Activated T-helper 1 cell treated with anti-CD3 and anti-CD28 coated beads, Interleukin-12 subunit alpha, Interleukin-12 subunit beta, Interleukin-2, Interleukin-4 antibody, amounts not matched to agents 30 ng/mL and 10 ng/mL and 1 ng/mL, durations not matched to agents 14 hours and 24 hours and 36 hours (primary cell): ENCODE measurements at regions of chr2 and their contacts with region 1.

Region 1: DNA sequence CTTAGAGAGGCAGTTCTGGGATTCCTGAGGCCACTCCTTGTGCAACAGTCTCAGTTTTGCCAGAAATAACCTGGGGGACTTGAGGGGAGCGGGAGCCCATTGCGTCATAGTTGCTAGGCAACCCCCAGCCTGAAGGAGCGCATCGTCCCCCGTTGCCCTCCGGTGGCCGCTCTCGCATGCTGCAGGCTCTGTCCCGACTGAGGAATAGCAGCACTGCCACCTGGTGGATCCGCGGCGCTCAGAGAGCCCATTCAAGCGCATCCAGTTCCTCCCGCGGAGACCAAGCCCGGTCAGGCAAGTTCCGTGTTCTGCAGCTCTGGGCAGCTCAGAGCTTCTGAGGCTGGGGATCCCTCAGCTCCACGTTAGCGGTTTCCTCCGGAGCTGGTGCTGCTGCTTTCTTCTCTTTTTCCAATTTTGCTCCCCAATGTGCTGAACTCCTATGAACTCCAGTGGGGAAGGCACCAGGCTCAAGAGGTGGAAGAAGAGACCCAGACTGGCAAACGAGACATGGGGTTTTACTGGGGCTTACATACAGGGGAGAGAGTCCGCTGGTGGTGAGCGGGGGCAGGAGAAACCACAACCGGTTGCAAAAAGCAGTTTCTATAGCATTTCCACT is 15.1 kb downstream of the SLC4A3 start:
- DNase-seq: peak; percentile 83
- H3K4me3 Mint-ChIP-seq: no peak overlapping the region
- H3K27ac Mint-ChIP-seq: no peak overlapping the region
- H3K4me1 Mint-ChIP-seq: peaks cover 11% of the 10 kb centered on the region
- H3K27me3 Mint-ChIP-seq: peaks cover 11% of the 10 kb centered on the region

Region 2: DNA sequence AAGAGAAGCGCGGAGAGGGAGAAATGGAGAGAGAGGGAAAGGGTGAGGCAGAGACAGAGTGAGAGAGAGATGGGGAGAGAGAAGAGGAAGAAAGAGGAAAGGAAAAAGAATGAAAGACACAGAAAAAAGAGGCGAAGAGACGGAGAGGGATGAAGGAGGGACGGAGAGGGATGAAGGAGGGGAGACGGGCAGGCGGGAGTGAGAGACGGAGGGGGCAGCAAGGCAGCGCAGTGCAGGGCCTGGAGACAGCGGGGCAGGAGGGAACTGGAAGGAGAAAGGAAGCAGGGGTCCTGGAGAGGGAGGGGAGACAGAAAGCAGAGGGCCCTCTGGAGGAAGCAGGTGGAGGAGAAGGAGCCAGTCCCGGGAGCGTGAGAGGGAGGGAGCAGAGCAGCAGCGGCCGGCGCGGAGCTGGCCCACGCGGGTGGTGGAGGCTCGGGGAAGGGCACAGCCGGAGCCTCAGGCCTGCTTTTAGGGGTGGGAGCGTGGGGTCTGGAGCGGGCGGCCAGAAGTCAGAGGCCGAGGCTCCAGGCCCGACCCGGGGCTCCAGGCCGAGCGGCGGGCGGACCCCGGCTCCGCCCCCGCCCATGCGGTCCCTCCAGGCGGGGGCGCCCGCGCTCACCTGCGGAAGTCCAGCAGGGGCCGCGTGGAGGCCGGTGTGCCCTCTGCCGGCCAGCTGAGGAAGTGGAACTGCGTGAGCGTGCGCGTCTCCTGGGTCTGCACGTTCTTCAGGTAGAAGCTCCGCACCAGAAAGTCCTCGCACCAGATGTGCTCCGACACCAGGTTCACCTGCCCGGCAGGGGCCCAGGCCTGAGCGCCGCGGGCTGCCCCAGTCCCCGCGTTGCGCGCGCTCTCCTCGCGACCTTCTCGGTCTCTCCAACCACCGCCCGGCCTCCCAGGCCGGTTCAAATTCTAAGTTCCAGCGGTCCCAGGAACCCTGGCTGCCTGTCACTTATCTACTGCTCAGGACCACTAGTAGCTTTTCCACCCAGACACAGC is 347.9 kb before region 1 on chr2:
- intact Hi-C with region 1: no loop called
- DNase-seq: peak; percentile 87
- H3K4me3 Mint-ChIP-seq: peak overlapping the region; percentile 80
- H3K27ac Mint-ChIP-seq: peak overlapping the region; percentile 87
- H3K4me1 Mint-ChIP-seq: peaks cover 14% of the 10 kb centered on the region
- H3K27me3 Mint-ChIP-seq: peaks cover 17% of the 10 kb centered on the region

Region 3: DNA sequence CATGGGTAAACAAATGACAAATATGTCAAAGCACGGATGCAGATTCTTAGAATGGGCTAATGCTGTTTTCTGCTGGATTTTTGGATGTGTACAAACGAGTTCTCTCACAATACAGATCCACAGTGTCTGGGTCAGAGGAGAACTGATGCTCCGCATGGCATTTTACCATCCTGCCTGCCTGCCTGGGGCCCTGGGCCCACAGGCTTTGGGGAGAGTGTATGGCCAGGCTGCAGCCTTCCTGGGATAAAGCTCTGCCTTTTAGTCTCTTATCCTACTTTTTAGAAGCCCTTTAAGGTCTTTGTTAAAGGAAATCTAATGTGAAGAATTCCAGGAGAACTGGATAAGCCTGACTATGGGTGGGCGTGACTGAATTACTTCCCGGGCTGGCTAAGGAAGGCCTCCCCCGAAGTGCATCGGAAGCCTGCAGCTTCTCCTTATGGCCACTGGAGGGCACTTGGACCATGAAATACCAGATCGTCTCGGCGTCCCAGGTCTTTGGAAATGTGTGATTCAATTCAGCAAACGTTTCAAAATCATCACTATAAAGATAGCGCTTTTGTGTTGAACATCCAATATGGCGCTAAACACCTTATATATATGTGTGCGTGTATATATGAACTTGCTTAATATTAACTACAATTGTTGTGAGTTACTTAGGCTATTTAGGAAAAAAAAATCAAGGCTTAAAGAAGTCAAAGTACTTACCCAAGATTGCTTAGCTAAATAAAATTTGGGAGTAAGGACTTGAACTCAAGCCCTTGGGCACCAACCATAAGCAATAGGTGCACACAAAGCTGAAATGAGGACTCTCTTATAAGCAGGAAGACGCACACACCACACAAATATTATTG is 239.7 kb before region 1 on chr2:
- intact Hi-C with region 1: loop called (anchors 1 kb)
- DNase-seq: peak; percentile 45
- H3K4me3 Mint-ChIP-seq: no peak overlapping the region
- H3K27ac Mint-ChIP-seq: no peak overlapping the region
- H3K4me1 Mint-ChIP-seq: no peaks in the 10 kb centered on the region
- H3K27me3 Mint-ChIP-seq: peaks cover 14% of the 10 kb centered on the region

Region 4: GRCh38 chr2:219597552-219598307 is 44.8 kb before region 1 on chr2 and contains the start of gene STK11IP:
- intact Hi-C with region 1: loop called (anchors 1 kb)
- DNase-seq: peak; percentile 89
- H3K4me3 Mint-ChIP-seq: peak within 1 kb of the TSS; percentile 90
- H3K27ac Mint-ChIP-seq: peak within 1 kb of the TSS; percentile 96
- H3K4me1 Mint-ChIP-seq: peaks cover 26% of the 10 kb centered on the region
- H3K27me3 Mint-ChIP-seq: peaks cover 2% of the 10 kb centered on the region
- total RNA-seq, gene STK11IP: 38.0 and 38.9 TPM in 2 replicates

Region 5: GRCh38 chr2:219689676-219690628 is 47.4 kb after region 1 on chr2:
- intact Hi-C with region 1: loop called (anchors 1 kb)
- DNase-seq: peak; percentile 13
- H3K4me3 Mint-ChIP-seq: no peak overlapping the region
- H3K27ac Mint-ChIP-seq: no peak overlapping the region
- H3K4me1 Mint-ChIP-seq: peaks cover 1% of the 10 kb centered on the region
- H3K27me3 Mint-ChIP-seq: peaks cover 6% of the 10 kb centered on the region